PC-9 (cell line): ENCODE measurements at regions of chr5 and their contacts with region 1.

Region 1: GRCh38 chr5:140251527-140251973 is 51.4 kb downstream of the PFDN1 start:
- DNase-seq: peak; percentile 80 to 96
- H3K4me3 ChIP-seq: peak overlapping the region; percentile 9; the same call in 1 of the 2 replicates
- H3K27ac ChIP-seq: peak overlapping the region; percentile 96
- H3K4me1 ChIP-seq: peaks cover 74% of the 10 kb centered on the region
- H3K27me3 ChIP-seq: no peaks in the 10 kb centered on the region
- CTCF ChIP-seq: no peak

Region 2: GRCh38 chr5:139808493-139809139 is 442.9 kb before region 1 on chr5:
- CTCF ChIA-PET with region 1: no interaction called
- POLR2A ChIA-PET with region 1: no interaction called
- intact Hi-C with region 1: no loop called
- DNase-seq: peak in 1 of 2 experiments; percentile 48
- H3K4me3 ChIP-seq: no peak overlapping the region
- H3K27ac ChIP-seq: no peak overlapping the region
- H3K4me1 ChIP-seq: no peaks in the 10 kb centered on the region
- H3K27me3 ChIP-seq: peaks cover 72% of the 10 kb centered on the region
- CTCF ChIP-seq: no peak

Region 3: DNA sequence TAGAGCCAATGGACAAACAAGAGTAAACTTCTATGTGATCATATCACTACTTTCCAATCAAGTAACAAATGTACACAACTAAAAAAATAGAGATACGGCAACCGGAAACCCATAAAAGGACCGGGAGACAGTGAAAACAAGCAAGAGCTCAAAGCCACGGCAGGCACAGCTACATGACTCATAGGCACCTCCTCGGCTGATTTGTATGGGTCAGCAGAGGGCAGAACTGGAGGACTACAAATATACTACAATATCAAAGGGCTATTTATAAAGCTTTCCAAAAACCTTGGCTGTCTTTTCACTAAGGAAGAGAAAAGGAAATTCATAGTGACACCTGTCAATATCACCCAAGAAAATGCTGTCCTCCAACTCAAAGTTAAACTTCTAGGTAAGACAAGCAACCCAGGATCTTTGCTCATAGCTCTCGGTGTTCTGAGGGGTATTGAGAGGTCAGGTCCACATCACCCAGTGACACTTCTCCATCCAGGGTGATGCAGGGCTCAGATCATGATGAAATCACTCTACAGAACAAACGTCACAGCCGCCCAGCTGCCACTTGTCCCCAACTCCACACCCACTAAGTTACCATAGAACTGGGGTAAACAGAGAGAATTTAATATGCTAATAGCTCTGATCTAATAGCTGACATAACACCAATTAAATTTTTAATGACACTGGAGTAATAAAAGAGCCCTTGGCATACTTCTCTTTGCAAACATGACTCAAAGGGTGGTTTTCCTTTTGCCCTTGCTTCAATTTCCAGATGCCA is 10.0 kb after region 1 on chr5:
- CTCF ChIA-PET with region 1: interaction called, 4 read pairs
- POLR2A ChIA-PET with region 1: no interaction called
- intact Hi-C with region 1: loop called (anchors 1 kb)
- DNase-seq: peak; percentile 77 to 95
- H3K4me3 ChIP-seq: peak overlapping the region; percentile 4; the same call in 1 of the 2 replicates
- H3K27ac ChIP-seq: peak overlapping the region; percentile 98
- H3K4me1 ChIP-seq: peaks cover 68% of the 10 kb centered on the region
- H3K27me3 ChIP-seq: no peaks in the 10 kb centered on the region
- CTCF ChIP-seq: no peak

Region 4: GRCh38 chr5:140295414-140295813 is 43.9 kb after region 1 on chr5:
- CTCF ChIA-PET with region 1: no interaction called
- POLR2A ChIA-PET with region 1: interaction called, 8 read pairs
- intact Hi-C with region 1: loop called (anchors 2 kb)
- DNase-seq: peak; percentile 62 to 92
- H3K4me3 ChIP-seq: no peak overlapping the region
- H3K27ac ChIP-seq: peak overlapping the region; percentile 45
- H3K4me1 ChIP-seq: peaks cover 60% of the 10 kb centered on the region
- H3K27me3 ChIP-seq: no peaks in the 10 kb centered on the region
- CTCF ChIP-seq: no peak

Region 5: GRCh38 chr5:140317859-140318258 is 66.3 kb after region 1 on chr5:
- CTCF ChIA-PET with region 1: no interaction called
- POLR2A ChIA-PET with region 1: interaction called, 15 read pairs
- intact Hi-C with region 1: loop called (anchors 1 kb)
- DNase-seq: peak in 1 of 2 experiments; percentile 34
- H3K4me3 ChIP-seq: no peak overlapping the region
- H3K27ac ChIP-seq: no peak overlapping the region
- H3K4me1 ChIP-seq: peaks cover 31% of the 10 kb centered on the region
- H3K27me3 ChIP-seq: no peaks in the 10 kb centered on the region
- CTCF ChIP-seq: no peak

Region 6: DNA sequence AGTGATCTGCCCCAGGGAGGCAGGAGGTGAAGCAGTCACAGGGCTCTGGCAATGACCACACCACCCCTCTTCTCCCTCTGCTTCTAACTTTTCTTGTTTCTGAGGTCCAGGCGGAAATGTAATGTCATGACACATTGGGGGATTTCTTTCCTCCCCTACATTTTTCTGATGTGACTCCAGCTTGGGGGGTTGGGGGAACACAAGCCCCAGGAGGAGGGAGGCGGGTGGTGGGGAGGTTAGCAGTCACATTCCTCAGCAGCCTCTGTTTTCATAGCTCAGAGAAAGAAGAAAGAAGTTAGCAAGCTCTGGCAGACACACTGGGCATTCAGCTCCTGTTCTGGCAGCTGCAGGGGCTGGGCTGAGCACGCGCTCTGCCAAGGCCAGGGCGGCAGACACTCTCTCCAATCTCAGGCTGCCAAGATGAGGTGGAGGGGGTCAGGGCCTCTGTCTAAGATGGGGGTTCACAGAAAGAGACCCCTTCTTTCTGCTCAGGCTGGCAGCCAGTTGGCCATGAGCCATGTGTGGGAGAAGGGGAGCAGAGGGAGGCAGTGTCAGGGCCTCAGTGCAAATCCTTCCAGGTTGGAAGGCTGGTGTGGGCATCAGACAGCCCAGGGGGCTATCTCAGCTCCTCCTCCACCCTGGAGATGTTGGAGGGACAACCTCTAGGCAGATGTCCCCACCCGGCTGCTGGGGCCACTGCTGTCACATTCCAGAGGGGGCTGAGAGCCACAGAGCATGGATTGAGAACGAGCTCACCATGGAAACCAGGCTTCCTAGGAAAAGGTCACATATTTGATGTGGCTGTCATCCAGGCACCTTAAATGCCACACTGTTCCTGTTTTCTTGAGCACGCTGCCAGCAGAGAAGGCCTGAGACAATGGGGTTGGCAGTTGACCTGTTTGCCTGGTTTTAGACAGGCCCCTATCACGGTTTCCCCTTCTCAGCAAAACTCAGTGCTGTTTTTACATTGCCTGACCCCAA is 71.5 kb after region 1 on chr5:
- CTCF ChIA-PET with region 1: no interaction called
- POLR2A ChIA-PET with region 1: no interaction called
- intact Hi-C with region 1: loop called (anchors 1 kb)
- DNase-seq: peak; percentile 80 to 95
- H3K4me3 ChIP-seq: peak overlapping the region; percentile 43; the same call in 1 of the 2 replicates
- H3K27ac ChIP-seq: peak overlapping the region; percentile 94
- H3K4me1 ChIP-seq: peaks cover 61% of the 10 kb centered on the region
- H3K27me3 ChIP-seq: no peaks in the 10 kb centered on the region
- CTCF ChIP-seq: no peak